Tibial artery (tissue), 4 donors: ENCODE measurements at regions of chr15 and their contacts with region 1.

Region 1: GRCh38 chr15:39756806-39757522 is 25.7 kb downstream of the FSIP1 start:
- DNase-seq: no peak
- H3K4me3 ChIP-seq: no peak overlapping the region
- H3K27ac ChIP-seq: no peak overlapping the region
- H3K4me1 ChIP-seq: no peaks in the 10 kb centered on the region
- H3K27me3 ChIP-seq: no peaks in the 10 kb centered on the region
- CTCF ChIP-seq: peak; percentile 71 to 83

Region 2: DNA sequence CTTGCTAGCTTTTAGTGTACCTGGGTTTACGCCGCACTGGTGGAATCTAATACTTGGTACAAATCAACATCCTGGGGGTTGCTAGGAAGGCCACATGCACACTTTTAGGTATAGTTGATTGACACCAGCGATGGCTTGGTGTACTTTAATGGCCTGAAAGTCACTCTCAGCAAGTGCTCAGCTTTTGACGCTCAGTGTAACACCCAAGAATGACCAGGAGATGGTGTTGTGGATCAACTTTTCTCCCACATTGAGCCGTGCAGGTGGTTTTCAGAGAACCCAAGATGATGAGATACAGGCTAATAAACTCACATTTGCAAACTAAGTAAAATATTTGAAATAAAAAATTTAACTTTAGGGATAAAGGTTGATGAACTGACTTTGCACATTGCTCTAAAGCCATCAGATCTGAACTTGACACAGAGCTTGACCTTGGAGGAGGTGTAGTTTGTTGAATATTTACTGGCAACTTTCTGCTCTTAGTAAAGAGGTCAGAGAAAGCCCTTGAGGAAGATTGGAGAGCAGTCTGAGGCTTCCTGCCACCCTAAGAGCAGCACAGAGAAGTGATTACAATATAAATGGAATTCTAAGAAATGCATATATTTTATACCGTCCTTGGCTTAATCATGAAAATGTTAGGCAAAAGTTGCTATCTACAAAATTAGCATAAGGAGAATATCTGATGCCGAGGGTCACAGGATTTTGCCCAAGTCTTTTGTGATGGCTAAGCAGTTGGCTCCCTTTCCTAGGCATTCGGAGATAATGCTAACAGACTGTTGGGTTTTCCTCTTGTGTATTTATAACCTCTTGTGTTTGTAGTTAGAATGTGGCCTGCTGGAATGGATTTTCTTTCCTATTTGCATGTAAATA is 1048.9 kb before region 1 on chr15:
- intact Hi-C with region 1: loop called (anchors 5 kb)
- DNase-seq: no peak
- H3K4me3 ChIP-seq: no peak overlapping the region
- H3K27ac ChIP-seq: no peak overlapping the region
- H3K4me1 ChIP-seq: no peaks in the 10 kb centered on the region
- H3K27me3 ChIP-seq: peaks cover 0 to 13% of the 10 kb centered on the region in 2 donors
- CTCF ChIP-seq: peak; percentile 62 to 70

Region 3: DNA sequence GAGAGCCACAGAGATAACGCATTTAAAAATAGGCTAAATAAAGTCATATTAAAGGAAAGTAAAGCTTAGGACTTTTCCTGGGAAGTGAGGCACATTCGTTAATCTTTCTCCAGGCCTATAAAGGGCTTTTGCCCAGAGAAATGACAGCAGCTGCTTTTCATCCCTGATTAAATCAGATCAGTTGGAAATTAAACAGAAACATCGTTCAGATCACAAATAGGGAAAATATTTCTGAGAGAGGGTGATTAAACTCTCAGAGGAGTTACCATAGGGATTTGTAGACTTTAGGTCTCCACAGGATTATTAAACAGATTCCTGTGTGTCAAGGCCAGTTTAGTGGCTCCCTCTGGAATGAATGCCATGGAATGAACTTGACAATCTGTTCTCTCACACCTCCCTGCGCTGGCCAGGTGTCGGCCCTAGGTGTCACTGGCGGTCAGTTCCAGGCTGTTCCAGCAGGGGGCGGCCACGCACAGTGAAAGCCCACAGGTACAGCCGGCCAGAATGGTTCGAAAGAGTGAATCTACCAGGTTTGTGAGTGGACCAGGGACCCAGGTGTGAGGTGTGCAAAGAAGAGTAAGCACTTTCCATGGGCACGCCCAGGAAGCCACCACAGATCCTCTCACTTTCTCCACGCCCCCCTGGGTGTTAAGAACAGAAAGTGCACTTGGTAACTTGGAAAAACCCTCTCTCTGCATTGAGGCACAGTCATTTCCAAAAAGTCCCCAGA is 939.4 kb before region 1 on chr15:
- intact Hi-C with region 1: loop called (anchors 5 kb)
- DNase-seq: peak; percentile 85 to 88
- H3K4me3 ChIP-seq: no peak overlapping the region
- H3K27ac ChIP-seq: no peak overlapping the region
- H3K4me1 ChIP-seq: peaks cover 0 to 6% (median 5%) of the 10 kb centered on the region in 4 donors
- H3K27me3 ChIP-seq: no peaks in the 10 kb centered on the region
- CTCF ChIP-seq: peak; percentile 99

Region 4: GRCh38 chr15:39171944-39172368 is 585.0 kb before region 1 on chr15:
- intact Hi-C with region 1: loop called (anchors 5 kb)
- DNase-seq: peak; percentile 39 to 69
- H3K4me3 ChIP-seq: no peak overlapping the region
- H3K27ac ChIP-seq: no peak overlapping the region
- H3K4me1 ChIP-seq: peaks cover 0 to 29% (median 7%) of the 10 kb centered on the region in 4 donors
- H3K27me3 ChIP-seq: no peaks in the 10 kb centered on the region
- CTCF ChIP-seq: peak; percentile 34 to 44

Region 5: DNA sequence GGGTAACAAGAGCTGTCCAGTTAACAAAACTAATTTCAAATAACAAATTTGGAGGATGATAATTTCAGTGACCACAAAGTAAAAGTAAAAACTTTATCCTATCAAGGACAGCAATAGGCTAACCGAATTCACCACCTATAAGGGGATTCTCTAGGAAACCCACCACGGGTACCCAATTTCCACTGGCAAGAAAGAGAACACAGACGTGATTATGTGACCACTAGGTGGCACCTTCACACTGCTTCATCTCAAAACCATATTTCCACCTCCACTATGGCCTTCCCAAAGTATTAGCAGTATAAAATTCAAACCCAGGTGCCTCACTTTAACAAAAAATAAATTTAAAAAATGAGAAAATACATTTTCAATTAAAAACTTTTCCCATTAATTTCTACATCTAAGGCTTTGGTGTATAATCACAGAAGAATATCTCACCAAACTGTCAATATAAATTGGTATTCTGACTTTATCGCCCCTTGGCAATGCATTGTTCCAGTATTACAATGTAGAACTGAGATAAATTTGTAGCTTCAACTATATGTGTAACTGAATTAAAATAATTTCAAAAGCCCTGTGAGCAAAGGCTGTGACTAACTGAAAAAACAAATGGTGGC is 70.9 kb before region 1 on chr15:
- intact Hi-C with region 1: loop called (anchors 2 kb)
- DNase-seq: peak in 1 of 2 donors; percentile 20
- H3K4me3 ChIP-seq: no peak overlapping the region
- H3K27ac ChIP-seq: no peak overlapping the region
- H3K4me1 ChIP-seq: peaks cover 0 to 16% (median 6%) of the 10 kb centered on the region in 4 donors
- H3K27me3 ChIP-seq: no peaks in the 10 kb centered on the region
- CTCF ChIP-seq: peak; percentile 58 to 80

Region 6: DNA sequence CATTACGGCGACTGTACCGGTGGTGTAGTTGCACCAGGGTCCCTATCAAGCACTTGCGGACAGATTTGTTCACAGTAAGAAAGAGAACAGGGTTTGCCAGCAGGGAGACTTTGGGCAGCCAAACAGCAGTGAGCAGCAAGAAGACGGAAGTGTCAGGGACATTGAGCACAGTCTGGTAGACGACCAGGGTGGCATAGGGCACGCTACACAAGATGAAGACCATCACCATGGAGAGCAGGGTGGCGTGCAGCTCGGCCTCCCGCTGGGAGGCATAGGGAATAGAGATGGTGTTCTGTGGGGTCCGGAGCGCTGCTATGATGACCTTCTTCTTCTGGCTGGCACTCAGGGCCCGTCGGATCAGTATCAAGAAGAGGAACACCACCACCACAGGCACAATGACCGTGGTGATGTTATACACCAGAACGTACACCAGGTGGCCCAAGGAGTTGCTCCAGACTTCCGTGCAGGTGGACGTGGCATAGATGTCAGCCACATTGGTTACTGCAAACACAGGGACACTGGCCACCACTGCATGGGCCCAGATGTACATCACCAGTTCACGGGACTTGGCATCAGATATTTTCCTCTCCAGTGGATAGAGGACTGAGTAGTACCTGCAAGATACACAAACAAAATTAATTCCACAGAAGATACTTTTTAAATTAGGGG is 44.8 kb after region 1 on chr15:
- intact Hi-C with region 1: no loop called
- DNase-seq: no peak
- H3K4me3 ChIP-seq: no peak overlapping the region
- H3K27ac ChIP-seq: no peak overlapping the region
- H3K4me1 ChIP-seq: no peaks in the 10 kb centered on the region
- H3K27me3 ChIP-seq: no peaks in the 10 kb centered on the region
- CTCF ChIP-seq: peak; percentile 6 to 17

Region 7: DNA sequence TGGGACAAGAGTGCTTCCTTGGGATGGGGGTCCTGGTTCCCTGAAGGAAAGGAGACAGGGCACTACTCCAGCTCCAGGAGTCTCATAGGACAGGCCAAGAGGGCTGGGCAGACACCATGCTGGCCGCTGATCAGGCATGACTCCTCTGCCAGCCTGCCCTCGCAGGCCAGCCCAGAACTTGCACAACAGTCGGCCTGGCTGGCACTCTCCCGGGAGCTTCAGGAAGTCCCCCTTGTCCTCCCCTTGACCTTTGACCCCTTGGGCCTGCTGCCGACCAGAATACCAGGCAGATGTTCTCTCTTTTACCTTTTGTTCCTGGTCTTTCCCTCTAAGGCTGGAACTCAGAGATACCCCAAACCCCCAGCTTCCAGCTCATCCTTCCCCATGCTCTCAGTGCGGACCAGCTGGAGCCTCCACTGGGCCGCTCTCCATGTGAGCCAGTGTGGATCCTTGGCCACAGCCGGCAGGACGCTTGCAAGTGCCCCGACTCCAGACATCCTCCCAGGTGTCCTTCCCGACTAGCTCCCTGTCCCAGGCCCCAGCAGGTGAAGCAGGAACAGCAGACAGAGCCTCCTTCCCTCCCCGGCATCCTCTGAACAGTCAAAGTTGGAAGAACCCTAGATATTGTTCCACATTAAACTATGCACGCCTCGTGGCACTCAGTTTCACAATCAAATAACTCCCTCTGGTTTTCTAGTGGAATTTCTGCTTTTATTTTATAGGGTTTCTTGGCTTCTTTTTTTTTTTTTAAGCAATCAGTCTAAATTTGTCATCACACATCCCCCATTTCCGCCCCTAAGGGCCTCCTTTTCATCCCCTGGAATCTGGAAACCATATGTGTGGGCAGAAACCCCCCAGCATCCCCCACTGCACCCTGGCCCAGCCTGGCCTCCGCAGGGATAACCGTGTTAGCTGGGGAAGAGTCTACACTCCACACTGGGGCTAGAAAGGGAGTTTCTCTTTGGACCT is 1153.0 kb after region 1 on chr15:
- intact Hi-C with region 1: no loop called
- DNase-seq: no peak
- H3K4me3 ChIP-seq: no peak overlapping the region
- H3K27ac ChIP-seq: peak overlapping the region in 1 of 2 donors; percentile 14
- H3K4me1 ChIP-seq: peaks cover 12 to 33% (median 22%) of the 10 kb centered on the region in 4 donors
- H3K27me3 ChIP-seq: no peaks in the 10 kb centered on the region
- CTCF ChIP-seq: no peak